H1 (cell line): ENCODE measurements at regions of chr19 and their contacts with region 1.

Region 1: GRCh38 chr19:19297759-19298158 is 22.6 kb downstream of the SUGP1 start:
- DNase-seq: no peak
- H3K4me3 ChIP-seq: no peak overlapping the region
- H3K27ac ChIP-seq: no peak overlapping the region
- H3K4me1 ChIP-seq: no peaks in the 10 kb centered on the region
- H3K27me3 ChIP-seq: no peaks in the 10 kb centered on the region
- CTCF ChIP-seq: no peak
- EP300 ChIP-seq: no peak
- POLR2A ChIP-seq: no peak
- RAD21 ChIP-seq: no peak

Region 2: GRCh38 chr19:19280561-19280960 is 17.2 kb before region 1 on chr19:
- CTCF ChIA-PET with region 1: interaction called, 5 read pairs
- POLR2A ChIA-PET with region 1: interaction called, 11 read pairs
- DNase-seq: no peak
- H3K4me3 ChIP-seq: no peak overlapping the region
- H3K27ac ChIP-seq: no peak overlapping the region
- H3K4me1 ChIP-seq: no peaks in the 10 kb centered on the region
- H3K27me3 ChIP-seq: no peaks in the 10 kb centered on the region
- CTCF ChIP-seq: no peak
- EP300 ChIP-seq: no peak
- POLR2A ChIP-seq: no peak
- RAD21 ChIP-seq: no peak

Region 3: DNA sequence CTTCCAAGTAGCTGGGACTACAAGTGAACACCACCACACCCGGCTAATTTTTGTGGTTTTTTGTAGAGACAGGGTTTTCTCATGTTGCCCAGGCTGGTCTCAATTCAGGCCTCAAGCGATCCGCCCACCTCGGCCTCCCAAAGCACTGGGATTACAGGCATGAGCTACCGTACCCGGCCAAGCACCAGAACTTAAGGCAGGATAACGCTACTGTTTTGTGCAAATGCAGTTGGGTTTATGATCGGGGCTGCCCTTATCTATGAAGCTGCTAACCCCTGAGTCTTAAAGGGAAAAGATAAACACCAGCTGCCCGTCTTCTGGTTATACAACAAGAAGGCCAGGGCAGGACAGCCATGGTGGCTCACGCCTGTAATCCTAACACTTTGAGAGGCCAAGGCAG is 12.1 kb before region 1 on chr19:
- CTCF ChIA-PET with region 1: interaction called, 5 read pairs
- POLR2A ChIA-PET with region 1: interaction called, 13 read pairs
- DNase-seq: no peak
- H3K4me3 ChIP-seq: no peak overlapping the region
- H3K27ac ChIP-seq: no peak overlapping the region
- H3K4me1 ChIP-seq: no peaks in the 10 kb centered on the region
- H3K27me3 ChIP-seq: no peaks in the 10 kb centered on the region
- CTCF ChIP-seq: no peak
- EP300 ChIP-seq: no peak
- POLR2A ChIP-seq: no peak
- RAD21 ChIP-seq: no peak